Activated CD4-positive, alpha-beta memory T cell treated with anti-CD3 and anti-CD28 coated beads for 36 hours (primary cell): ENCODE measurements at regions of chr18 and their contacts with region 1.

Region 1: GRCh38 chr18:79679111-79679872 is at the start of gene CTDP1:
- DNase-seq: peak; percentile 99
- H3K4me3 Mint-ChIP-seq: peak within 1 kb of the TSS; percentile 90
- H3K27ac Mint-ChIP-seq: peak within 1 kb of the TSS; percentile 98
- H3K4me1 Mint-ChIP-seq: peaks cover 63% of the 10 kb centered on the region
- H3K27me3 Mint-ChIP-seq: no peaks in the 10 kb centered on the region
- total RNA-seq, gene CTDP1: 35.4 to 36.0 TPM

Region 2: DNA sequence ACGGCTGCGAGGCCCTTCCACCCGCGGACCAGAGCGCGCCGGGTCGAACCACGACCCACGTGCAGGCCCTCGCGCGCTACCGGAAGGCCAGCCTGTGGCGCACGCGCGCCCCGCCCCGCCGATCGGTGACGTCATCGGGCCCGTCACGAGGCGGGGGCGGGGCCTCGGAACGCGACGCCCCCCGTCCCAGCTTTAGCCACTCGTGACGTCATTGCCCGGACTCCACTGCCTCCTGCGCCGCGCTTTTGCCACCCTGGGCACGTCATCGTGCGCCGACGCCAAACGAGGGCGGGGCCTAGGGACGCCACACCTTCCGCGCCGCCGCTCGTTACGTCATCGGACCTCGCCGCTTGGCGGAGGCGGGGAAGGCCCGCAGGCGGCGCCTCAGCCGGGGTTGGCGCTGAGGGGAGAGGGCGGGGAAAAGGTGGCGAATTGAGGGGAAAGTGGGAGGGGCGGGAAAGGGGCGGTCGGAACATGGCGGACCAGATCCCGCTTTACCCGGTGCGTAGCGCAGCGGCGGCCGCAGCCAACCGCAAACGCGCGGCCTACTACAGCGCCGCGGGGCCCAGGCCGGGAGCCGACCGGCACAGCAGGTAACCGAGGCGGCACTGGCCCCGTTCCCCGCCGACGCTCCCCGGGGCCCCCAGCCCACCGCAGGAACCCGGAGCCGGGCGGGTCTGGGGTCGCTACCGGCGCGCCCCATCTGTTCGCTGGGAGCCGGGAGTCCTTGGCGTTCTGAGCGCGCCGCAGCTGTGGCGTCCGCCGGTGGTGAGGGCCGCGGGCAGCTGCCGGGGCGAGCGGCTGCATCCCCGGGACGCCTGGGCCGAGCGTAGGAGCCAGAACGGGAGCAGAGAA is 610.1 kb before region 1 on chr18 and contains the start of gene ATP9B:
- CTCF ChIA-PET with region 1: no interaction called
- POLR2A ChIA-PET with region 1: no interaction called
- intact Hi-C with region 1: loop called (anchors 1 kb)
- DNase-seq: peak; percentile 99
- H3K4me3 Mint-ChIP-seq: peak within 1 kb of the TSS; percentile 84
- H3K27ac Mint-ChIP-seq: peak within 1 kb of the TSS; percentile 92
- H3K4me1 Mint-ChIP-seq: peaks cover 35% of the 10 kb centered on the region
- H3K27me3 Mint-ChIP-seq: peaks cover 8% of the 10 kb centered on the region
- total RNA-seq, gene ATP9B: 15.9 to 16.6 TPM

Region 3: GRCh38 chr18:79405781-79406575 is 273.3 kb before region 1 on chr18:
- CTCF ChIA-PET with region 1: no interaction called
- POLR2A ChIA-PET with region 1: interaction called, 3 read pairs
- intact Hi-C with region 1: loop called (anchors 2 kb)
- DNase-seq: peak; percentile 94
- H3K4me3 Mint-ChIP-seq: peak overlapping the region; percentile 69
- H3K27ac Mint-ChIP-seq: peak overlapping the region; percentile 94
- H3K4me1 Mint-ChIP-seq: peaks cover 55% of the 10 kb centered on the region
- H3K27me3 Mint-ChIP-seq: no peaks in the 10 kb centered on the region

Region 4: GRCh38 chr18:79951578-79952455 is 272.5 kb after region 1 on chr18 and contains the start of gene SLC66A2:
- CTCF ChIA-PET with region 1: no interaction called
- POLR2A ChIA-PET with region 1: no interaction called
- intact Hi-C with region 1: loop called (anchors 1 kb)
- DNase-seq: peak; percentile 95
- H3K4me3 Mint-ChIP-seq: peak within 1 kb of the TSS; percentile 79
- H3K27ac Mint-ChIP-seq: peak within 1 kb of the TSS; percentile 42
- H3K4me1 Mint-ChIP-seq: peaks cover 29% of the 10 kb centered on the region
- H3K27me3 Mint-ChIP-seq: no peaks in the 10 kb centered on the region
- total RNA-seq, gene SLC66A2: 27.2 to 29.5 TPM

Region 5: DNA sequence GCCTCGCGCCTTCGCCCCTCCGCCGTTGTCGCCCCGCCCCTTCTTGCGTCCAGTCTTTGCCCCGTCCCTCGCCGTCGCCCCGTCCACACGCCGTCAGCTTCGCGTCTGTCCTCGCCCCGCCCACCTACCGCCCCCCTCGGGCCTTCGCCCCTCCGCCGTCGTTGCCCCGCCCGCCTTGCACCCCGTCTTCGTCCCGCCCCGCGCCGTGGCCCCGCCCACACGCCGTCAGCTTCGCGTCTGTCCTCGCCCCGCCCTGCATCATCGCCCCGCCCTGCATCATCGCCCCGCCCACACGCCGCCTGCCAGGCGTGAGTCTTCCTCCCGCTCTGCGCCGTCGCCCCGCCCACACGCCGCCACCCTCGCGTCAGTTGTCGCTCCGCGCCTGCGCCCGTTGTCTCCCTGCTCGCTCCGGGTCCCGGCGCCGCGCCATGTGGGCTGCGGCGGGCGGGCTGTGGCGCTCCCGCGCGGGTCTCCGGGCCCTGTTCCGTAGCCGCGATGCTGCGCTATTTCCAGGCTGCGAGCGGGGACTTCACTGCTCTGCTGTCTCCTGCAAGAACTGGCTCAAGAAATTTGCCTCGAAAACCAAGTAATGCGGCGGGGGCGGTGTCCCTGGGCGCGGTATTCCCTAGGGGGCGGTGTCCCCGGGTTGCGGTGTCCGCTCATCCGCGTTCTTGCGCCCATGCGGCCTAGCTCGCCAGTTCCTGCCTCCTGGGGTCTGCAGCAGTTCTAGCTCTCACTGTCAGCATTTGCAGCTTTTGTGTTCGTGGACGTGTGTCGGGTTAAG is 355.0 kb after region 1 on chr18 and contains the start of gene RBFA:
- CTCF ChIA-PET with region 1: no interaction called
- POLR2A ChIA-PET with region 1: no interaction called
- intact Hi-C with region 1: loop called (anchors 1 kb)
- DNase-seq: peak; percentile 100
- H3K4me3 Mint-ChIP-seq: peak within 1 kb of the TSS; percentile 89
- H3K27ac Mint-ChIP-seq: peak within 1 kb of the TSS; percentile 82
- H3K4me1 Mint-ChIP-seq: peaks cover 22% of the 10 kb centered on the region
- H3K27me3 Mint-ChIP-seq: no peaks in the 10 kb centered on the region
- total RNA-seq, gene RBFA: 29.5 to 31.8 TPM

Region 6: DNA sequence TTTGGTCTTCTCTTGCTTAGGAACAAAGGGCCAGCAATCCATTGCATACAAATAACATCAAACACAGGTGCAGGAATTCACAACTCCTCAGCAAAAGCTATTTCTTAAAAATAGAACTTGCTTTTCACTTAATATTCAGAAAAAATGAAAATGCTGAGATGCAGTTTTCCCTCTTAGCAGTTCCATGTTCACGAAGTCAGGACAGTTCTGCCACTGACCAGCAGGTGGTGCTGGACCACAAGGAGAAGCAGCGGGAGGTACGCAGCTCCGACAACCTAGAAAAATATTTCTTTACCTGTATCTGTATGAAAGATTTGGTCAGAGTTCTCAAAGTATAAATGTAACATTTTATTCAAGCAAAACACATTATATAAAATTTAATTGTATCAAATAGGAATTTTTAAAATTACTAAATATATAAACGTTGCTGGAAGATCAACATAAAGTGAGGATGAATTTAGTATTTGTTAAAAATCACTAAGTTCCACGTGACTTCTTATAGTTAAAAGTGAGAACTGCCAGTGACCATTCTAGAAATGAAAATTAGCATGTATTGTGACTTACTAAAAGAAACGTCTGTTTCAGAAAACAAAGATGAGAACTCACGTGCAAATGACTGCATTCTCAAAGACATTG is 478.5 kb after region 1 on chr18:
- CTCF ChIA-PET with region 1: no interaction called
- POLR2A ChIA-PET with region 1: no interaction called
- intact Hi-C with region 1: loop called (anchors 10 kb)
- DNase-seq: peak; percentile 85
- H3K4me3 Mint-ChIP-seq: no peak overlapping the region
- H3K27ac Mint-ChIP-seq: no peak overlapping the region
- H3K4me1 Mint-ChIP-seq: peaks cover 12% of the 10 kb centered on the region
- H3K27me3 Mint-ChIP-seq: peaks cover 20% of the 10 kb centered on the region